Dendritic cell treated with granulocyte-macrophage colony-stimulating factor and Interleukin-4, amounts not matched to agents 40 ng/mL and 50 ng/mL, for 4 days (primary cell): ENCODE measurements at regions of chr1 and their contacts with region 1.

Region 1: DNA sequence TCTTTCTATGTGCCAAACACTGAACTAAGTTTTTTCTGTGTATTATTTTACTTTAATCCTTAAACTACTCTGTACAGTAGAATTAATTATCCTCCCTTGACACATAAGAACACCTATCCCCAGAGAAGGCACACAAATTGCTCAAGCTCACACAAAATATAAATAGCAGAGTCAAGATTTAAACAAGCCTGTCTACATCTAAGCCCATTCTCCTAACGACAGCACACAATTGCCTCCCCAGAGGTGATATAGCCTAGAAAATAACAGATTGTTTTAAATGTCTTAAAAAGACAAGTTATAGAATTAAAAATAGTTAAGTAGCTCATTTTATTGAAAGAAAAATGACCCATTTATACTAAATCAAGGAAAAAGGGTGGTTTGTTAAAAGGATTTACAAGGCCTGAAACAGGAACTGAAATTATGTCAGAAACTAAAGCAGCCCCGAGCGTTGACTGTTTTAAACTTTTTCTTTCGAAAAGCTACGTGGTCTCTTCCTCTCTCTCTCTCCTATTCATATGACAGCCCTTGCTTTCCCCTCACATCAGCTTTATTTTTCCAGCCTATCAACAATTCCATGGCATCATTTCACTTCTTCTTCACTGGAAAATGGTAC is 30.5 kb downstream of the TNFSF18 start:
- H3K4me3 Mint-ChIP-seq: peak overlapping the region; percentile 17
- H3K27ac Mint-ChIP-seq: peak overlapping the region; percentile 88
- H3K4me1 Mint-ChIP-seq: peaks cover 49% of the 10 kb centered on the region
- H3K27me3 Mint-ChIP-seq: no peaks in the 10 kb centered on the region

Region 2: GRCh38 chr1:173050865-173051264 is 30.6 kb after region 1 on chr1 and contains the start of gene TNFSF18:
- intact Hi-C with region 1: loop called (anchors 5 kb)
- H3K4me3 Mint-ChIP-seq: peak within 1 kb of the TSS; percentile 21
- H3K27ac Mint-ChIP-seq: peak within 1 kb of the TSS; percentile 72
- H3K4me1 Mint-ChIP-seq: peaks cover 31% of the 10 kb centered on the region
- H3K27me3 Mint-ChIP-seq: no peaks in the 10 kb centered on the region

Region 3: GRCh38 chr1:173112129-173112528 is 91.9 kb after region 1 on chr1:
- intact Hi-C with region 1: loop called (anchors 5 kb)
- H3K4me3 Mint-ChIP-seq: no peak overlapping the region
- H3K27ac Mint-ChIP-seq: peak overlapping the region; percentile 64
- H3K4me1 Mint-ChIP-seq: peaks cover 54% of the 10 kb centered on the region
- H3K27me3 Mint-ChIP-seq: no peaks in the 10 kb centered on the region